Activated naive CD4-positive, alpha-beta T cell treated with anti-CD3 and anti-CD28 coated beads, Interleukin-2, amount 10 ng/mL, durations not matched to agents 7 days and 5 days (primary cell): ENCODE measurements at regions of chr3 and their contacts with region 1.

Region 1: DNA sequence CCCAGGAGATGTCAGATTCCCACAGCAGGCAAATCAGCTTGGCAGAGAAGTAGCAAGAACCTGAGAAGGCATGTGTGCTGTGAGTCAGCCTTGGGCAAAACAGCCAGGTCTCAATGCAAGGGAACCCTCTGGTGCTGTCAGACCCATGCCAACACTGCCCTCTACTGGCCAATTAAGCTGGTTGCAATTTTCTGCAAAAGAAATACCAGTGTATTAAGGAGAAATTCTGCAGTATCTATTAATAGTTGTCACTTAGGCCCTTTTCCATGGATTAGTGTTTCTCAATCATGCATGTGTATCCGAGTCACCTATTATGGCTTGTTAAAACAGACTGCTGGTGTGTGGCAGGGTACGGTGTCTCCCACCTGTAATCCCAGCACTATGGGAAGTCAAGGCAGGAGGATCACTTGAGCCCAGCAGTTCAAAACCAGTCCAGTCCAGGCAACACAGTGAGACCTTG is 26.2 kb downstream of the MAP4 start:
- DNase-seq: peak; percentile 80
- H3K4me3 Mint-ChIP-seq: no peak overlapping the region
- H3K27ac Mint-ChIP-seq: no peak overlapping the region
- H3K4me1 Mint-ChIP-seq: no peaks in the 10 kb centered on the region
- H3K27me3 Mint-ChIP-seq: no peaks in the 10 kb centered on the region

Region 2: GRCh38 chr3:47824541-47825473 is 165.2 kb before region 1 on chr3:
- CTCF ChIA-PET with region 1: interaction called, 12 read pairs
- DNase-seq: peak; percentile 80
- H3K4me3 Mint-ChIP-seq: peak overlapping the region; percentile 88
- H3K27ac Mint-ChIP-seq: peak overlapping the region; percentile 84
- H3K4me1 Mint-ChIP-seq: peaks cover 41% of the 10 kb centered on the region
- H3K27me3 Mint-ChIP-seq: no peaks in the 10 kb centered on the region

Region 3: DNA sequence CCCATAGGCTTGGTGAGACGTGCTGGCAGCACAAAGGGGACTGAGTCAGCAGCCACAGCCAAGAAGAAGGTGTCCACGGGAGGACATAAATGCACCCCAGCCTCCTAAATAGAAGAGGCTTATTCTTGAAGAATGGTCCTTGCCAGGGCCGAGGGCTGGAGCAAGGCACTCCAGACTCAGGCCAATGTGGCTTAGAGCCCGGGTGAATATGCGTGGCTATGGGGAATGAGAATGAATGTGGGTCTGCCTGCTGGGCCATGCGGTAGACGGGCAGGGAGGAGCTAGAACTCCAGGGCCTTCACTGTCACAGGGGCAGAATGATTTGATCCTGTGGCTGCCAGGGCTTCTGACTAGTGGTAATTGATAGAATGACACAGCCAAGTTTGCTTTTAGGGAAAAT is 153.0 kb before region 1 on chr3:
- CTCF ChIA-PET with region 1: interaction called, 51 read pairs
- DNase-seq: no peak
- H3K4me3 Mint-ChIP-seq: no peak overlapping the region
- H3K27ac Mint-ChIP-seq: no peak overlapping the region
- H3K4me1 Mint-ChIP-seq: no peaks in the 10 kb centered on the region
- H3K27me3 Mint-ChIP-seq: no peaks in the 10 kb centered on the region

Region 4: DNA sequence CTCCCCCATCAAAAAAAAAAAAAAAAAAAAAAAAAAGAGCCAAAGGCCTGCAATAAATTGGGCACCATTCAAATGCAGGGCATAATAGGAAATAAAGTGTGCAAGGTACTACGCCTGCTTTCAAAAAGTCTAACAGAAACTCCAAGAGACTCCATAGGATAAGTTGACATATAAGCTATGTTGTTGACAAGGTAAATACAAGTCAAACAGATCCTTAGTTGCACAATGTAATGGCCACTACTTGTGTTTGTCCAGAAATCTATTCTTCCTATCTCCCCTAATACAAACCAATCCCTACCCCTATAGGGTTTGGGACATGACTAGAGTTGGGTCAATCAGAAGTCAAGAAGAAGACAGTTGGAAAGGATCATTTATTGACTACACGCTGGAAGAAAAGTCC is 10.2 kb after region 1 on chr3:
- CTCF ChIA-PET with region 1: interaction called, 11 read pairs
- DNase-seq: no peak
- H3K4me3 Mint-ChIP-seq: no peak overlapping the region
- H3K27ac Mint-ChIP-seq: no peak overlapping the region
- H3K4me1 Mint-ChIP-seq: no peaks in the 10 kb centered on the region
- H3K27me3 Mint-ChIP-seq: no peaks in the 10 kb centered on the region